ENCODE measurements at regions of chr3 and their contacts with region 1.

Region 1: DNA sequence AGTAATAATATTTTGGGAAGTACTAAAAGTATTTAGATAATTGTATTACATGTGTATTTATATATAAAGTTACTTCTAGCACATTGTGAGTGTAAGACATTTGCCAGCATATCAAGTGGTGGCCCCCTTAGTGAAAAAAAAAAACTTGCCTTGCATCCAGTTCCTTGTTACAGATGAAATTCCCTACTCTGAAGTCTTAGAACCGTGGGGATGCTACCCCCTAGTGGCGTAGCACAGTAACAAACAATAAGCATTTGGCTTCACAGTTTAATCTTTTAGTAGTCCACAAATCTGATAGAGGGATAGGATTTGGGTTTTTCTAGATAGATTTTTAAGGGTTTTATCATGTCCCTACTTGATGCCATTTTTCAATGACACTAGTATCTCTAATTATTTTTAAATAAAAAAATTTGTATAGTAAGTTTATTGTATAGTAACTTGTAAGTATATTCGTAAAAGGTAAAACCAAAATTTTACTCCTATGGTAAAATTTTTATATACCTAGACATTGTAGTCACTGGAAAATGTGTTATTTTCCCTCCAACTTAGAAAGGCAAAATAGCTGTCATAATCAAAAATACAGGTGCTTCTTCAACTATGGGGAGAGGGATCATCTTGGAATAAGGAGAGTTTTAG is 14.3 kb downstream of the SMC4 start:
- DNase-seq: peak; percentile 27 to 83 (median 52)
- ATAC-seq: peak; percentile 57 to 83 (median 70)
- H3K4me3 ChIP-seq: no peak overlapping the region
- H3K4me3 Mint-ChIP-seq: no peak overlapping the region
- H3K27ac ChIP-seq: no peak overlapping the region
- H3K27ac Mint-ChIP-seq: no peak overlapping the region
- H3K4me1 ChIP-seq: peaks cover 0 to 31% of the 10 kb centered on the region in 2 experiments
- H3K4me1 Mint-ChIP-seq: peaks cover 5 to 22% (median 13%) of the 10 kb centered on the region in 3 donors
- H3K27me3 ChIP-seq: no peaks in the 10 kb centered on the region
- H3K27me3 Mint-ChIP-seq: no peaks in the 10 kb centered on the region

Region 2: DNA sequence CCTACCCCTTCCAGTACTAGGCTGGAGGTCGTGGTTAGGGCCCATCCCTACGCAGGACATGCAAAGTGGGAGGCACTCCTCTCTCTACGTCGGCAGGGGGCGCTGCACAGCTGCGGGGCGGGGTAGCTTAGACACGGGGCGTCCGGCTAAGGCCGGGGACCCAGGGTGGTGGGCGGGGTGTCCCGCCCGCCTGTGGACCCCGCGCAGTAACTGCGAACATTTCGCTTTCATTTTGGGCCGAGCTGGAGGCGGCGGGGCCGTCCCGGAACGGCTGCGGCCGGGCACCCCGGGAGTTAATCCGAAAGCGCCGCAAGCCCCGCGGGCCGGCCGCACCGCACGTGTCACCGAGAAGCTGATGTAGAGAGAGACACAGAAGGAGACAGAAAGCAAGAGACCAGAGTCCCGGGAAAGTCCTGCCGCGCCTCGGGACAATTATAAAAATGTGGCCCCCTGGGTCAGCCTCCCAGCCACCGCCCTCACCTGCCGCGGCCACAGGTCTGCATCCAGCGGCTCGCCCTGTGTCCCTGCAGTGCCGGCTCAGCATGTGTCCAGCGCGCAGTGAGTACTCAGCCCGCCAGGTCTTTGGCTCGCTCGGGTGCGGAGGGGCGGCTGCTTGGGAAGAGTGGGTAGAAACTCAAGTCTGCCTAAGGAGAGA is 425.0 kb before region 1 on chr3 and contains the start of gene IL12A:
- CTCF ChIA-PET with region 1: interaction called, 4 to 10 read pairs
- POLR2A ChIA-PET with region 1: no interaction called
- DNase-seq: peak; percentile 59 to 87 (median 76)
- ATAC-seq: peak; percentile 94 to 96 (median 94)
- H3K4me3 ChIP-seq: peak within 1 kb of the TSS; percentile 60 to 83
- H3K4me3 Mint-ChIP-seq: peak within 1 kb of the TSS; percentile 80 to 84 (median 84)
- H3K27ac ChIP-seq: no peak within 1 kb of the TSS
- H3K27ac Mint-ChIP-seq: peak within 1 kb of the TSS; percentile 24 to 53
- H3K4me1 ChIP-seq: peaks cover 7 to 27% of the 10 kb centered on the region in 2 experiments
- H3K4me1 Mint-ChIP-seq: peaks cover 19 to 29% (median 28%) of the 10 kb centered on the region in 3 donors
- H3K27me3 ChIP-seq: peaks cover 0 to 8% of the 10 kb centered on the region in 2 experiments
- H3K27me3 Mint-ChIP-seq: peaks cover 0 to 2% of the 10 kb centered on the region in 2 donors
- total RNA-seq, gene IL12A: 0.57 to 3.1 (median 0.69) TPM

Region 3: DNA sequence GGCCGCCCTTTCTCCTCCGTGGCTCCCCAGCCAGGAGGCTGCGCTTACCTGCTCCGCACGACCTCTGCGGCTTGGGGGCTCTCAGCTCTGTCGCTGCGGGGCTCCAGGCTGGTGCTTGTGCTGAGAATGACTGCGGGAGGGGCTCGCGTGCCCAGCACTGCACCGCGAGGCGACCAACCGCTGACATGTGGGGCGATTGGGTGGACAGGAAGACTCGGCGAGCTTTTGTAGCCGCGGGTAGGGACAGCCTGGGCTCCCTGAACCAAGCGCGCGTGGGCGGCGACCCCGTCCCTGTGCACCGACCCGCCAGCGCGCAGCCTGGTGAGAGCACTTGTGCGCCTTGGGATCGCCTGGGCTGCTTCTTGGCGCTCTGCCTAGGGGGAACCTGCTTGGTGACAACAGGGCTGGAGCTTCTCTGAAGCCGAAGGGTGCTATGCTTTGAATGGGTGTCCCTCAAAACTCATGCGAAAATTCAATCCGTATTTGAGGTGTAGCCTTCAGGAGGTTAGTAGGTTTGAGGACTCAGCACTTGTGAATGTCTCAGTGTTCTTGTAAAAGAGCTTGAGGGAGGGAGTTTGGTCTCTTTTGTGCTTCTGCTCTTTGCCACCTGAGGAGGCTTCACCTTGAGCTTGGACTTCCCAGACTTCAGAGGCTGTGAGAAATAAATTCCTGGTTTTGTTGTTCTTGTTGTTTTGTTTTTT is 374.7 kb before region 1 on chr3:
- CTCF ChIA-PET with region 1: interaction called, 6 to 11 read pairs
- POLR2A ChIA-PET with region 1: no interaction called
- DNase-seq: no peak
- ATAC-seq: no peak
- H3K4me3 ChIP-seq: peak overlapping the region in 1 of 2 donors; percentile 39
- H3K4me3 Mint-ChIP-seq: peak overlapping the region in 1 of 3 donors; percentile 13
- H3K27ac ChIP-seq: no peak overlapping the region
- H3K27ac Mint-ChIP-seq: no peak overlapping the region
- H3K4me1 ChIP-seq: peaks cover 0 to 6% of the 10 kb centered on the region in 2 experiments
- H3K4me1 Mint-ChIP-seq: peaks cover 0 to 4% (median 0%) of the 10 kb centered on the region in 3 donors
- H3K27me3 ChIP-seq: peaks cover 4 to 18% of the 10 kb centered on the region in 2 experiments
- H3K27me3 Mint-ChIP-seq: peaks cover 29 to 36% of the 10 kb centered on the region in 2 donors

Region 4: DNA sequence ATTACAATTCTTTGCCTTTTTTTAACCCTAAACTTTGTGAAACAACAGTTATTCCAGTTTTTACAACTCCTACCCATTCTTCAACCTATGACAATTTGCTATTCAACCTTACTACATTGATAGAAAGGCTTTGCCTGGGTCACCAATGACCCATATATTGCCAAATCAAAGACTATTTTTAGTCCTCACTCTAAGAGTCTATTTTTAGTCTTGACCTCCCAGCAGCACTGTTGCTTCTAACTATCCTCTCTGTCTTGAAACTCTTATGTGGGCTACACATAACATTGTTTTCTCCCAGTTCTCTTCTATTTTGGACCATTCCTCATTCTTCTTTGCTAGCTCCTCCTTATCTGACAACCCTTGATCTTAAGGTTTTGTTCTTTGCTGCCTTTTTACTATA is 117.1 kb before region 1 on chr3:
- CTCF ChIA-PET with region 1: no interaction called
- POLR2A ChIA-PET with region 1: no interaction called
- DNase-seq: no peak
- ATAC-seq: no peak
- H3K4me3 ChIP-seq: no peak overlapping the region
- H3K4me3 Mint-ChIP-seq: no peak overlapping the region
- H3K27ac ChIP-seq: no peak overlapping the region
- H3K27ac Mint-ChIP-seq: no peak overlapping the region
- H3K4me1 ChIP-seq: no peaks in the 10 kb centered on the region
- H3K4me1 Mint-ChIP-seq: no peaks in the 10 kb centered on the region
- H3K27me3 ChIP-seq: no peaks in the 10 kb centered on the region
- H3K27me3 Mint-ChIP-seq: no peaks in the 10 kb centered on the region

Region 5: GRCh38 chr3:160449636-160450598 is 36.2 kb after region 1 on chr3 and contains the start of gene TRIM59:
- CTCF ChIA-PET with region 1: interaction called, 4 to 17 read pairs
- POLR2A ChIA-PET with region 1: interaction called, 3 read pairs
- DNase-seq: peak; percentile 89 to 99 (median 96)
- ATAC-seq: peak; percentile 95 to 98 (median 98)
- H3K4me3 ChIP-seq: peak within 1 kb of the TSS; percentile 59 to 89
- H3K4me3 Mint-ChIP-seq: peak within 1 kb of the TSS; percentile 93 to 99 (median 97)
- H3K27ac ChIP-seq: peak within 1 kb of the TSS; percentile 90
- H3K27ac Mint-ChIP-seq: peak within 1 kb of the TSS; percentile 94 to 98
- H3K4me1 ChIP-seq: peaks cover 7 to 26% of the 10 kb centered on the region in 2 experiments
- H3K4me1 Mint-ChIP-seq: peaks cover 32 to 47% (median 46%) of the 10 kb centered on the region in 3 donors
- H3K27me3 ChIP-seq: peaks cover 0 to 4% of the 10 kb centered on the region in 2 experiments
- H3K27me3 Mint-ChIP-seq: no peaks in the 10 kb centered on the region
- total RNA-seq, gene TRIM59: 14.5 to 25.2 (median 17.7) TPM